Psoas muscle (tissue), 8 donors: ENCODE measurements at regions of chr9 and their contacts with region 1.

Region 1: DNA sequence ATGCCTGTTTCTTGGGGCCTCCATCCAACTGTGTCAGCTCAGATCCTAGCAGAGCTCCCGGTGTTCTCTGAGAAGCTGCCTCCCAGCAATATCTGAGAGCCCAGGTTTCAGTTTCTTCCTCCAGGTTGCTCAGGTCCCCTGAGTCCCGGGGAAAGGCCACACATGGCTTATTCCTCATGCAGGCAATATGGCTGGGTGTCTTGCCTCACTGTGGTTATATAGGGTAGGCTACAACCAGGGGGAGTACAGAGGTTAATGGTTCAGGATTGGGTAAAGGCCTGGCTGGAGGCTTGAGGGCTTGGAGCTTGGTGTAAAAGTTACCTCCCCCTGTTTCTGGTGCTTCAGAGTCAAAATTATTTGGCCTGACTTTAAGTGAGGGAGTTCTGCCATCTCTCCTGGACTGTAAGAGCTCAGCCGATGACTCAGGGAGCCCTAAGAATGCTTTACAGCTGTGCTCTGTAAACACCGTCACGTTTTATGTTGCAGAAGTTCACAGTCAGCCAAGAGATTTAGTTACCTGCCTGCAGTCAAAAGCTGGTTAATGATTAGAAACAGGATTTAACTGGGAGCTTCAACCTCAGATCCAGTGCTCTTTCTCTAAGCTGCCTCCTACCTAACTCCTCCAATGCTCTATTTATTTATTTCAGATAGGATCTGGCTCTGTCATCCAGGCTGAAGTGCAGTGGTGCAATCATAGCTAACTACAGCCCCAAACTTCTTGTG is 24.3 kb upstream of the UBAP2 start:
- DNase-seq: no peak
- ATAC-seq: peak; percentile 90 to 94 (median 94)
- H3K4me3 ChIP-seq: no peak overlapping the region
- H3K27ac ChIP-seq: peak overlapping the region; percentile 86
- H3K4me1 ChIP-seq: peaks cover 30% of the 10 kb centered on the region
- H3K27me3 ChIP-seq: no peaks in the 10 kb centered on the region
- CTCF ChIP-seq: no peak

Region 2: GRCh38 chr9:33816327-33817252 is 256.4 kb before region 1 on chr9 and contains the start of gene UBE2R2:
- intact Hi-C with region 1: loop called in 1 of 2 experiments (anchors 10 kb)
- DNase-seq: peak; percentile 91 to 95
- ATAC-seq: peak; percentile 79 to 88 (median 86)
- H3K4me3 ChIP-seq: peak within 1 kb of the TSS; percentile 93
- H3K27ac ChIP-seq: peak within 1 kb of the TSS; percentile 98
- H3K4me1 ChIP-seq: peaks cover 48% of the 10 kb centered on the region
- H3K27me3 ChIP-seq: no peaks in the 10 kb centered on the region
- CTCF ChIP-seq: no peak
- total RNA-seq, gene UBE2R2: 48.0 to 62.9 (median 52.2) TPM

Region 3: DNA sequence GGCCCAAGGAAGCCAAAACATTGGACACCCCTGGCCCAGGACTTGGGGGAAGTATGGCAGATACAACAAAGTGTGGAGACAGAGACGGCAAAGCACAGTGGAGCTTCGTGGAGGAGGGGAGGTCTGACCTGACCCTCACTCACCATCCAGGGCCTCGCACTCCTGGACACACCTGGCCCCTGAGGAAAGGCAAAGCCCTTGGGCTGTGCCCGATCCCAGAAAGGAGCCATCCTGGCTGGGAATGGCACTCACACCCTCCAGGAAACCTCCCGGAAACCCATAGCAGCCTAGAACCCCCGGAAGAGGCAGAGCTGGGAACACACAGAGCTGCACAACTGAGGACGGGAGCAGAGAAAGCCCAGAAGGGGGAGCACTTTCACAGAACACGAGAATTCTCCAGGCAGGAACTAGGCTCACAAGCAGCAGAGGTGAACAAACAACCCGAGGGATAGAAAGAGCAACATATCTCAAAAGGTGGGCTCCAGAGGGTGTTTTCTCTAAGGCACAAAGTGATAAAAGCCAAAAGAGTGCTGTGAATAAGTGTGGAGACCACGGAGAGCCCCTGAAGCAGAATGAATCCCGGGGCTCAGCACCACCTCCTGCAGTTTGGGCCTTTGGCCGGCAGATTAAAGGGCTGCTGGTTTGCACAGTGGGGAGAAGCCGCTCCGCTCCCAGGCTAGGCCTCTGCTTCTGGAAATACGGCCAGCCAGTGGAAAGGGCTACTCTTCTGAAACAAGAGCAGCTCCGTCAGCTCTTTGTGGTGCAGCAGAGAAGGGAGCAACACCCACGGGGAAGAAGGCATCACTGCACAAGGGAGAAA is 147.8 kb before region 1 on chr9:
- intact Hi-C with region 1: loop called (anchors 5 to 10 kb)
- DNase-seq: no peak
- ATAC-seq: peak; percentile 45 to 70 (median 62)
- H3K4me3 ChIP-seq: no peak overlapping the region
- H3K27ac ChIP-seq: peak overlapping the region; percentile 66
- H3K4me1 ChIP-seq: peaks cover 10% of the 10 kb centered on the region
- H3K27me3 ChIP-seq: no peaks in the 10 kb centered on the region
- CTCF ChIP-seq: peak; percentile 52

Region 4: GRCh38 chr9:34025062-34025461 is 48.0 kb before region 1 on chr9:
- intact Hi-C with region 1: loop called in 1 of 2 experiments (anchors 5 kb)
- DNase-seq: no peak
- ATAC-seq: peak; percentile 77 to 85 (median 84)
- H3K4me3 ChIP-seq: no peak overlapping the region
- H3K27ac ChIP-seq: peak overlapping the region; percentile 76
- H3K4me1 ChIP-seq: peaks cover 53% of the 10 kb centered on the region
- H3K27me3 ChIP-seq: no peaks in the 10 kb centered on the region
- CTCF ChIP-seq: no peak

Region 5: GRCh38 chr9:34145165-34145564 is 72.1 kb after region 1 on chr9:
- intact Hi-C with region 1: no loop called
- DNase-seq: peak in 1 of 2 donors; percentile 84
- ATAC-seq: peak in 3 of 4 donors; percentile 87 to 97 (median 96)
- H3K4me3 ChIP-seq: no peak overlapping the region
- H3K27ac ChIP-seq: peak overlapping the region; percentile 3
- H3K4me1 ChIP-seq: peaks cover 3% of the 10 kb centered on the region
- H3K27me3 ChIP-seq: no peaks in the 10 kb centered on the region
- CTCF ChIP-seq: no peak